Right cardiac atrium (tissue), 5 donors: ENCODE measurements at regions of chr2 and their contacts with region 1.

Region 1: GRCh38 chr2:23636426-23636825 is 251.4 kb downstream of the KLHL29 start:
- DNase-seq: peak in 2 of 3 donors; percentile 47 to 81
- ATAC-seq: peak; percentile 71 to 80
- H3K4me3 ChIP-seq: no peak overlapping the region
- H3K27ac ChIP-seq: no peak overlapping the region
- H3K4me1 ChIP-seq: peaks cover 8% of the 10 kb centered on the region
- H3K27me3 ChIP-seq: no peaks in the 10 kb centered on the region

Region 2: DNA sequence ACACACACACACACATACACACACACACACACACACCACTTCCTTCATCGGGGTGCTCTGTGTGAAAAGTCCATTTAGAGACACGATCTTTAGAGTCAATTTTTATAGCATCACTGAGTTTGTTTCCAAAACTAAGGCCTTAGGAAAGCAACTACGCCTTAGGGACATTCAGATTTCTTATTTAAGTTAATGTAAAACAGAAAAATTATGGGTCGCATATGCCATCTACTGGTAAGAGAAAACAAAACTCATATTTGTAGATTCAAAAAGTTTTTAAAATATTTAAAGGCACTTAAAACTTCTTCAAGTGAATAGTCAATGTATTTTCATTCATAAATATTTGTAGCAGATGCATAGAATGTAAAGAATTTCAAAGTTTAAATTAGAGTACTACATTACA is 124.3 kb after region 1 on chr2:
- intact Hi-C with region 1: loop called in 1 of 4 experiments (anchors 10 kb)
- DNase-seq: no peak
- ATAC-seq: no peak
- H3K4me3 ChIP-seq: no peak overlapping the region
- H3K27ac ChIP-seq: no peak overlapping the region
- H3K4me1 ChIP-seq: no peaks in the 10 kb centered on the region
- H3K27me3 ChIP-seq: no peaks in the 10 kb centered on the region